Dorsolateral prefrontal cortex (tissue), 120 donors: ENCODE measurements at regions of chr11 and their contacts with region 1.

Region 1: DNA sequence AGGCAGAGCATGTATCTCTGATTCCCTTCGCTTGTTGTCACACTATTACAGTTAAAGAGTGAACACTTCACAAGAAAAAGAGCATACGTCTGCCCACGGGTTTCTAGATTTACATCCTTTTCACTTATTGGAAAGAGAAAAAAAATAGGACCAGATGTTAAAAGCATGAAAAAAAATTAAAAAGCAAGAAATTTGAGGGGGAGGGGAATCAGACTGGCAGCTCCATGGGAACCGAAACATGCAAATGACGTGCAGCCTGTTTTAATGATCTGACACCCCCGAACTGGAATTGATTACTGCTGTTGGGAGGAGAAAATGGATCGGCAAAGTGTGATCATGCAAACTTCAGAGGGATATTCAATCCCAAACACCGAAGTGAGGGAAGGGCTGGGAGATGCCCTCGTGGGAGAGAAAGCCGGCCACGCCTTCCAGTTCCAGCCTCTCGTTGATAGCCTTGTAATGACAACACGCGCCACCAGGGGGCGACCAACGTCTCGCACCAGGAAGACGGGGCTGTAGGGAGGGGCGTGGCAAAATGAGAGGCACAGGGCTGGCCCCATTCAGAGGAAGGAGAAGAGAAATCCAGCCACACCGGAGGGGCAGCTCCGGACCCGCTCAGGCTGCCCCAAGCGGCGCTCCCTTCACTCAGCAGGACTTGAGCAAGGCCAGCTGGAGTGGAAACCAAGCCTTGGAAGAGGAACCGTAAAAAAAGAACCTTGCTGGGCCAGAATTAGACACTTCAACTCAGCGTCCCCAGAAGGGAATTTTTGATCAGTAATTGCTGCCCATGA is 53.8 kb upstream of the SYT13 start:
- DNase-seq: peak; percentile 87 to 94 (median 90)
- H3K4me3 ChIP-seq: peak overlapping the region in 57 of 59 donors; percentile 10 to 61 (median 38)
- H3K27ac ChIP-seq: peak overlapping the region in 7 of 59 donors; percentile 3 to 46 (median 21)
- H3K27me3 ChIP-seq: peaks cover 0 to 4% (median 0%) of the 10 kb centered on the region in 45 donors
- CTCF ChIP-seq: peak; percentile 67 to 98 (median 92)

Region 2: DNA sequence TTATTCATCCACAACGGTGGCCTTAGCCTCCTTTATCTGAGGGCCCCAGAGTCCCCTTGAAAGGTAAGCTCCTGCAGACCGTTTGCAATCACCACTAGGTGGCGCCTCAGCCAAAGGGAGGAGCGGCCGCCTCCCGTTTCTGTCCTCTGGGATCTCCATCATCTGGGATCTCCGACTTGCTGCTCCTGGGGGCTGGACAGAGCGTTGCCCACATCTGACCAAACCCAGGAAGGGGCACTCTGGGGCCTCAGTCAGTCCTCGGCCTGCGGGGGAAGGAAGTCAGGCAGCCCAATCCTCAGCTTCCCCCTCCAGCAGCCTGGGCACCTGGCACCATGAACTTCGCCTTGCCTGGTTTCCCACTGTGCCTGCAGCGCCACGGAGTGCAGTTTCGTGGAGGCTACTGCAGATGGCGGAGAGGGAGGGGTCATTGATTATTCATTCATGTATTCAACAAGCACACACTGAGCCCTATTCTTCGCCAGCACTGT is 412.7 kb before region 1 on chr11:
- intact Hi-C with region 1: loop called in 1 of 2 experiments (anchors 5 kb)
- DNase-seq: peak; percentile 79 to 90 (median 88)
- H3K4me3 ChIP-seq: peak overlapping the region in 54 of 59 donors; percentile 13 to 64 (median 42)
- H3K27ac ChIP-seq: peak overlapping the region in 57 of 59 donors; percentile 3 to 92 (median 76)
- H3K27me3 ChIP-seq: no peaks in the 10 kb centered on the region
- CTCF ChIP-seq: peak; percentile 76 to 99 (median 94)

Region 3: GRCh38 chr11:45365961-45366618 is 26.2 kb after region 1 on chr11:
- intact Hi-C with region 1: loop called in 1 of 2 experiments (anchors 1 kb)
- DNase-seq: peak in 5 of 10 donors; percentile 22 to 61 (median 52)
- H3K4me3 ChIP-seq: peak overlapping the region in 29 of 59 donors; percentile 2 to 46 (median 24)
- H3K27ac ChIP-seq: peak overlapping the region in 45 of 59 donors; percentile 4 to 76 (median 54)
- H3K27me3 ChIP-seq: peaks cover 0 to 2% (median 0%) of the 10 kb centered on the region in 45 donors
- CTCF ChIP-seq: peak in 5 of 56 donors; percentile 9 to 29 (median 10)